BJ (cell line): ENCODE measurements at regions of chr17 and their contacts with region 1.

Region 1: DNA sequence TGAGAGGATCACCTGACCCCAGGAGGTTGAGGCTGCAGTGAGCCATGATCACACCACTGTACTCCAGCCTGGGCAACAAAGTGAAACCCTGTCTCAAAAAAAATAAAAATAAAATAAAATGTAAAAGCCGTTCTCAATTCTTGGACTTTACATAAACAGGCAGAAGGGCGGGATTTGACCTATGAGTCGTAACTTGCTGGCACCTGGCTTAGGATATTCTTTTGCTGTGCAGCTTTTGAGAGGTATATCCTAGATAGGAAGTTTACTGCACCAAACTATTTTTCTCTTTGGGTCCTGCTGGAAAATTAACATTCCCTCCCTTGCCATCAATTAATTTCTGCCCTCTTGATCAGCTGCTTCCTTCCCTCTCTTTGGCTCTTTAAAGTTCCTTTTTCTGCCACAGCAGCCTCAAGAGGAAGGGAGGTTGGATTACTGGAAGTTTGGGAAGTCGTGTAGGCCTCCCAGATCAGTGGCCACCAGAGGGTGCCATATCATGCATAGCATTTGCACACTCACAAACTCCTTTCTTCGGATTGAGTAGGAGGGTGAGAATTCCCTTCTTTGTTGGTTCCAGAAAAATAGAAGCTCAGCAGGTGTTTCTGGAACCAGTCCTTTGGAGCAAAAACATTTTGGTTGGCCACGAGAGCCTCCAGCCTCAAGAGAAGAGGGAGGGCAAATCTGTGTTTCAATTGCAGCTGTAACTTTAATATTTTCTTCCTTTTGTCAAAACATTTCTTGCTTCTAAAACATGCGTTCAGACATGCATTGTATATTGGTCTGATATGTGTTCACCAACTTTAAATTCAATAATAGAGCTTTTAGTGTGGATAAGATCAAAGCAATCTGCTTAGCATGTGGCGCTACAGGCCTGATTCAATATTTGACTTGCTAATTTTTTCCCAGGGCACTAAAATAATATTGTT is 147.3 kb downstream of the CCDC182 start:
- DNase-seq: peak; percentile 8
- H3K4me3 ChIP-seq: no peak overlapping the region
- H3K27me3 ChIP-seq: no peaks in the 10 kb centered on the region
- CTCF ChIP-seq: peak; percentile 91

Region 2: DNA sequence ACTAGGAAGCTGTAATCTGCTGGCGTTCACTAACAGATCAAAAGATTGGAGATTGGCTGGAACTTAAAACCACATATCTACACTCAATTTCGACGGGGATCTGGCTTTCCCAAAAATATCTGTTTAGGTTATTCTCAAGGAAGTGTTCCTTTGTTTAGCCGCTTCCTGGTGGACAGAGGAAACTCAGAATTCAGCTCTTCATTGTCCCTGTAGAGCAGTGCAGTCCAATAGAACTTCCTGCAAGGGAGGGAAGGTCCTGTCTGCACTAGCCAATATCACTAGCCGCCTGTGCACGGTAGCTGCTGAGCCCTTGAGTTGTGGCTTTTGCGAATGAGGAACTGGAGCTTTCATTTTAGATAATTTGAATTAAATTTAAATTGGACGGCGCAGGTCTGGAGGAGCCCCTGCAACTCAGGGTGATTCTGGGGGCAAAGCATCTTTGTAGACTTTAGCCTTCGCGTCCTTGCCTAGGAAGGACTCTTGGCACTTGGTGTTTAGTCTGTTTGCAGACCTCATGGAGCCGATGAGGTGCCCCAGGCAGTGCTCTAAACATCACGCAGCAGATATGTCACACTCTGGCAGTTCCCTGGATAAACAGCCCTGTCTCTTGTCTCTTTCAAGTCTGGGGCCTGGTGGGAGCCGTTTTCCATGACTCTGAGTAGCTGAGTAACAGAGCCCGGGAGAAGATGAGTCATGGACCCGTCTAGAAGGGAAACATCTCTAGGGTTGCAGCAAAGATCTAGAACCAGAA is 25.1 kb after region 1 on chr17:
- CTCF ChIA-PET with region 1: interaction called, 24 read pairs
- POLR2A ChIA-PET with region 1: no interaction called
- DNase-seq: peak; percentile 19
- H3K4me3 ChIP-seq: no peak overlapping the region
- H3K27me3 ChIP-seq: no peaks in the 10 kb centered on the region
- CTCF ChIP-seq: no peak

Region 3: GRCh38 chr17:57671667-57672632 is 74.2 kb after region 1 on chr17:
- CTCF ChIA-PET with region 1: interaction called, 74 read pairs
- POLR2A ChIA-PET with region 1: no interaction called
- DNase-seq: peak; percentile 13
- H3K4me3 ChIP-seq: no peak overlapping the region
- H3K27me3 ChIP-seq: no peaks in the 10 kb centered on the region
- CTCF ChIP-seq: peak; percentile 99

Region 4: DNA sequence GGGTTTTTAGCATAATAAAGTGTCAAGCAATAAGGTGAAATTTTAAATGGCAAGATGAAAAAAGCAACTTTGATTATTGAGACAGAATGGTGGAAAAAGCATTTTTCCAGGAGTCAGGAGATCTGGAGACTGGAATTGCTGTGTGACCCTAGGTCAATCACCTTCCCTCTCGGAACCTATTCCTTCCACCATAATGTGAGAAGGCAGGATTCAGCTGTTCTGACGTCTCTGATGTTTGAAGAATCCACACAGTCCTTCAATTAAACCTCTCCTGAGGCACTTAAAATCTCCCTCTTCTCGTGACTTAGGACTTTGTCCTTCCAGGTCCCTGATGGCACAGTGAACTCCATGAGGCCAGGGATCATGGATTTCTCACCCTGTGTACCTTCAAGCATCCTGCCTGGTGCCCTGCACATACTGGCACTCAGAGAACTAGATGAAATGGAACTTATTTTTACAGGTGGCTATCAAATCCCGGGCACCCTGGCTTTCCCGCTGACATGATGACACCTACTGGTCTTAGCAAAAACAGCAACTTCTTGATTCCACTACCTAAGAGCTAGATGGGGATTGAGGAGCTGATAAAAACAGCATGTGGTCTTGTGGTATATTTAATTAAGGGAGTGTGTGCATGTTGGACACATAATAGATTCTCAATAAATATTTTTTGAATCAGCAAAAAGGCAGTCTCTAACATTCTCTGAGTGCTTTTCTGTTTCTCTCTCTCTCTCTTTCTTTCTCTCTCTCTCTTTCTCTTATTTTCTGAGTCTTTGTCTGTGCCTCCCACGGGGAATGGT is 149.6 kb after region 1 on chr17:
- CTCF ChIA-PET with region 1: interaction called, 12 read pairs
- POLR2A ChIA-PET with region 1: no interaction called
- DNase-seq: peak; percentile 9
- H3K4me3 ChIP-seq: no peak overlapping the region
- H3K27me3 ChIP-seq: peaks cover 11% of the 10 kb centered on the region
- CTCF ChIP-seq: peak; percentile 82

Region 5: DNA sequence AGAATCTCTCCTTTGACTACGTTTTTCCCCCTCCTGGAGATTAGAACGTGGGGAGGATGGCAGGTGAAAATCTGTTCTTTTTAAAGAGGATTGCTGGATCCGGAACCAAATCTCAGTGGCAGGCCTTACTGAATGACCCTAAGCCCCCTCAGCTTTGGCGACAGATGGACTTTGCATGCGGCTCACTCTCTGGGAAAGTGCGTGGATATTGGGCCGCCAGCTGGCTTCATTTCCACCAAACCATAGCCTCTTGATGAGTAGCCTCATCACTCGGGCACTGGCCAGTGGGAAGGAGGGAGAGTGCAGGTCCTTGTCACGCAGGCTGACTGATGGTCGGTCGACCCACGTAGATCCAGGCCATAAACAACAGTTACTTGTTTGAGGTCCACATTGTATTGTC is 178.6 kb after region 1 on chr17:
- CTCF ChIA-PET with region 1: no interaction called
- POLR2A ChIA-PET with region 1: no interaction called
- DNase-seq: no peak
- H3K4me3 ChIP-seq: no peak overlapping the region
- H3K27me3 ChIP-seq: peaks cover 10% of the 10 kb centered on the region; the same call in 1 of the 2 replicates
- CTCF ChIP-seq: no peak

Region 6: DNA sequence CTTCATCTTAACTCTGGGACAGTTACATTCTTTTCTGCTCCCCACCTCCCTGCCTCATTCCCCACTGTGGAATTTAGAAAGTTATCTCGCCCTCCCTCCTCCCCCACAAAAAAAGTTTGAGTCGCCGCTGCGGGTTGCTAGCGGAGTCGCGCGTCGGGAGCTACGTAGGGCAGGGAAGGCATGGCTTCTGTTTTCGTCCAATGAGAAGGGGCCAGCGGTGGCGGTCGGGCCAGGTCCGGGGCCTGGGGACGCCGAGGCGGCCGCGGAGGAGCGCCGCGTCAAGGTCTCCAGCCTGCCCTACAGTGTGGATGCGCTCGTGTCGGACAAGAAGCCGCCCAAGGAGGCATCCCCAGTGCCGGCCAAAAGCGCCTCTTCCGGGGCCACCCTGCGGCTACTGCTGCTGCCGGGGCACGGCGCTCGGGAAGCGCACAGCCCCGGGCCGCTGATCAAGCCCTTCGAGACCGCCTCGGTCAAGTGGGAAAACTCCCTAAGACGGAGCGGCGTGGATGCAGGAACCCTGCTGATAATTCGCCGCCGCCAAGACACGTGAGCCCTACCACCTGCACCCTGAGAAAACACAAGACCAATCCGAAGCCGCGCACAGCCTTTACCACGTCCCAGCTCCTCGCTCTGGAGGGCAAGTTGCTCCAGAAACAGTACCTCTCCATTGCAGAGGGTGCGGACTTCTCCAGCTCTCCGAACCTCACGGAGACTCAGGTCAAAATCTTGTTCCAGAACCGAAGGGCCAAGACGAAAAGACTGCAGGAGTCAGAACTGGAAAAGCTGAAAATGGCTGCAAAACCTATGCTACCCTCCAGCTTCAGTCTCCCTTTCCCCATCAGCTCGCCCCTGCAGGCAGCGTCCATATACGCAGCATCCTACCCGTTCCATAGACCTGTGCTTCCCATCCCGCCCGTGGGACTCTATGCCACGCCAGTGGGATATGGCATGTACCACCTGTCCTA is 559.3 kb after region 1 on chr17:
- CTCF ChIA-PET with region 1: no interaction called
- POLR2A ChIA-PET with region 1: interaction called, 10 read pairs
- DNase-seq: no peak
- H3K4me3 ChIP-seq: no peak overlapping the region
- H3K27me3 ChIP-seq: peaks cover 14% of the 10 kb centered on the region
- CTCF ChIP-seq: no peak